Dorsolateral prefrontal cortex (tissue), 120 donors: ENCODE measurements at regions of chr2 and their contacts with region 1.

Region 1: GRCh38 chr2:172465417-172466334 is 38.3 kb downstream of the ITGA6 start:
- DNase-seq: peak in 8 of 10 donors; percentile 41 to 86 (median 63)
- H3K4me3 ChIP-seq: peak overlapping the region in 57 of 59 donors; percentile 20 to 63 (median 44)
- H3K27ac ChIP-seq: peak overlapping the region in 4 of 59 donors; percentile 1 to 61 (median 41)
- H3K27me3 ChIP-seq: peaks cover 0 to 8% (median 0%) of the 10 kb centered on the region in 45 donors
- CTCF ChIP-seq: peak in 55 of 56 donors; percentile 72 to 96 (median 90)

Region 2: DNA sequence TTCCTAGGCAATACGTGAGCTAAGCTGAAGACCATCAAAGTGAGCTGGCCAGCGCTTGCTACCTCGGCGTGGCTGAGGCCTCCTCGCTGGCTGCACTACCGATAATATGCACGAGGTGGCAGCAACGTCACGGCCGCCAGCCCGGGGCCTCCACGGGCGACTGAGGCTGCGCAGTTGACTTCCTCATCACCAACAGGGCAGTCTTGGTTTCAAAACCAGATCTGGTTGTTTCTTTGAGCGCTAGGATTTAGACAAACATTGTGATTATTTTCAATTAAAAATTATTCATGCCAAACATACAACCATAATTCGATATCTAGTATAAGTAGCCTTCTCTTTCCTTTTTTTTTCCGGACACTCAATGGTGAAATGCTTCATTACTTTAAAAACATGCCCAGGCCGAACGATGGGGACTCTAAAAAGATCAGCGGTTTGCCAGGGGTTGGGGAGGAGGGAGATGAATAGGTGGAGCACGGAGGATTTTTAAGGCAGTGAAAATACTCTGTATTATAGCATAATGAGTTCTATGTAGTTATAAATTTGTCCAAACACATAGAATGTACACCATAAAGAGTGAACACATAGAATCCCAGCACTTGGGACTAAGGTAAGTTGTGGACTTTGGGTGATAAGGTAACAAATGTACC is 891.4 kb before region 1 on chr2:
- intact Hi-C with region 1: loop called in 1 of 2 experiments (anchors 10 kb)
- DNase-seq: peak; percentile 35 to 80 (median 64)
- H3K4me3 ChIP-seq: peak overlapping the region in 23 of 59 donors; percentile 3 to 44 (median 28)
- H3K27ac ChIP-seq: peak overlapping the region in 1 of 59 donors; percentile 12
- H3K27me3 ChIP-seq: peaks cover 0 to 5% (median 0%) of the 10 kb centered on the region in 45 donors
- CTCF ChIP-seq: peak; percentile 65 to 99 (median 95)

Region 3: DNA sequence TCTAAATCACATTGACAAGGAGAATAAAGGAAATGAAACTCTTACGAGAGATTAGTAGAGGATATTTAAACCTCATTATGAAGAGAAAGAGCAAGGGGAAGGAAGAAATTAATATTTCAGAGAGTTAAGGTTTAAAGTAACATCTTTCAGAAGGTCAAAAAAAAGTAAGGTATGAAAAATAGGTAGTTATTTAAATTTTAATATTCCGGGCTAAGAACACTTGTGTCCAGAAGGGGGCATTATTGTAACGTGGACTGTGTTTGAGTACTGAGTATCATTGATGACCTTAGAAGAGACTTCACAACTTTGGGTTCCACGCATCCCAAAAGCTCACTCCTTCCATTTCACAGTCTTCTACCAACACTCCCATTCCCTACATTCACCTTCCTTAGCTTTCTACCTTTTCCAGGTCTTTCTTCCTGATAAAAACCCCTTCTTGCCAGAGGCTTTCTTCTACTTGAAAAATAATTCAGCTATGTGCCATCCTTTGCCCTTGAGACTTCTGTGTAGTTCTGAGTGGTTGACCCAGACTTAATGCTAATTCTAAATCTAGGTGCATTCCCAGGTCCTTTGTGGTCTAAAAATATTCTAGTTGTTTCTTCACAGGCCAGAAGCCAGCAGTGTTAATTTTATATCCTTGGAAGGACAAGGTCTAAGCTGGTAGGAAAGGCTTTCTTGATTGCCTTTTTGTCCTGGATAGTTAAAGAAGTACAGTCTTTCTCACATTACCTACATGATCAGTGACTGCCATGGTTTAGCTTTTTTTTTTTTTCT is 761.9 kb before region 1 on chr2:
- intact Hi-C with region 1: loop called (anchors 10 kb)
- DNase-seq: no peak
- H3K4me3 ChIP-seq: no peak overlapping the region
- H3K27ac ChIP-seq: peak overlapping the region in 45 of 59 donors; percentile 6 to 73 (median 45)
- H3K27me3 ChIP-seq: no peaks in the 10 kb centered on the region
- CTCF ChIP-seq: peak in 54 of 56 donors; percentile 30 to 73 (median 56)

Region 4: DNA sequence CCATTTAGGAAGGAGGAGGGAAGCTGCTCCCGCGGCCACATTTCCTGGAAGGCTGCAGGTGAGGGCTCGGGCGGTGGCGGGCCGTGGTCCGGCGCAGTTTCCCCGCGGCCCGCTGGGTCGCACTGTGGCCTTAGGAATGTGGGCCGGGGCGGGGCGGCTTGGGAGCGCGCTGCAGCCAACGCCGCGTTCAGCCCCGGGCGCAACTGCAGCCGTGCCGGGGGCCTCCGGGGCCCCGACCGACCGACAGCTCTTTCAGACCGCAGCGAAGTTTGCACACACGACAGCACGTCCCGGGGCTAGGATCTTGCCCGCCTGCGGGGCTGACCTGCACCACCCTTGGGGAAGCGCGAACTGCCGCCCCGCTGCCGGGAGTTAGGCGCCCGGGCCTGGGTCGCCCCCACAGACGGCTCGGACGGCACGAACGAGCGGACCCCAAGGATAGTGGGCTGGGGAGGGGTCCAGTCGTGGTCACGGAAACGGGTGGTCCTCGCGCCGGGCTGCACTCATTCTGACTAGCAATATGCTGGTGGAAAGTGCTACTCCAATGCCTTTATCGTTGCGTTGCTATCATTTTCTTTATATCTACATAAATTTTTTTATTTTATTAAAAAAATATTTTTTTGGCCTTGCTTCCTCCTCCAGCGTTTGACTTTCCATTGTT is 293.0 kb before region 1 on chr2:
- intact Hi-C with region 1: loop called (anchors 1 kb)
- DNase-seq: peak in 9 of 10 donors; percentile 28 to 81 (median 53)
- H3K4me3 ChIP-seq: peak overlapping the region; percentile 42 to 79 (median 63)
- H3K27ac ChIP-seq: peak overlapping the region in 7 of 59 donors; percentile 11 to 48 (median 26)
- H3K27me3 ChIP-seq: peaks cover 0 to 12% (median 0%) of the 10 kb centered on the region in 45 donors
- CTCF ChIP-seq: peak in 55 of 56 donors; percentile 52 to 96 (median 83)

Region 5: GRCh38 chr2:172285010-172285621 is 180.6 kb before region 1 on chr2:
- intact Hi-C with region 1: loop called in 1 of 2 experiments (anchors 10 kb)
- DNase-seq: no peak
- H3K4me3 ChIP-seq: no peak overlapping the region
- H3K27ac ChIP-seq: peak overlapping the region in 17 of 59 donors; percentile 10 to 53 (median 28)
- H3K27me3 ChIP-seq: no peaks in the 10 kb centered on the region
- CTCF ChIP-seq: no peak

Region 6: GRCh38 chr2:172427256-172427989 is 38.3 kb before region 1 on chr2 and contains the start of gene ITGA6:
- intact Hi-C with region 1: loop called in 1 of 2 experiments (anchors 2 kb)
- DNase-seq: peak in 9 of 10 donors; percentile 42 to 80 (median 60)
- H3K4me3 ChIP-seq: peak within 1 kb of the TSS; percentile 54 to 96 (median 78)
- H3K27ac ChIP-seq: peak within 1 kb of the TSS in 49 of 59 donors; percentile 1 to 85 (median 67)
- H3K27me3 ChIP-seq: peaks cover 0 to 19% (median 0%) of the 10 kb centered on the region in 45 donors
- CTCF ChIP-seq: peak in 41 of 56 donors; percentile 12 to 60 (median 32)
- total RNA-seq, gene ITGA6: 15.5 to 84.3 (median 30.7) TPM